HAP-1 (cell line): ENCODE measurements at regions of chr9 and their contacts with region 1.

Region 1: DNA sequence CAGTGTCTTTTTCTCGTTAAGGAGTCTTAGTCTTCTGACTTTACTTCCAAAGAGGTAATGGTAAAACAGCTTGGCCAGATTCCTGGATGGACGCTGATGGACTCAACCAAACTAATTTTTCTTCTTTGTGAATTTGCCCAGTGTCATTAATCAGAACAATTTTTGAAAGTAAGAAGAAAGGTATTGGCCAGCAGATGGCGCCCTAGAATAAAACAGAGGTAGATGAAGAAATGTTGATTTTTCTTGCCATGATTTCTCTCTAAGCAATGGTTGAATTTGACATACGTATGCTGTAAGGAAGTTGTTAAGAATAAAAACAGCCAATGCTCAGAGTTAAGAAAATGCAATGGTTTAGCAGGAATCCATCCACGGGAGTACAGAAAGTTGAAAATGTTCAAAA is 500.0 kb downstream of the DIRAS2 start:
- DNase-seq: peak; percentile 11 to 67
- H3K4me3 ChIP-seq: no peak overlapping the region
- H3K4me1 ChIP-seq: no peaks in the 10 kb centered on the region
- H3K27me3 ChIP-seq: 0 out of 2 replicates have a peak, but pooled peaks cover 2% of the 10 kb centered on the region

Region 2: DNA sequence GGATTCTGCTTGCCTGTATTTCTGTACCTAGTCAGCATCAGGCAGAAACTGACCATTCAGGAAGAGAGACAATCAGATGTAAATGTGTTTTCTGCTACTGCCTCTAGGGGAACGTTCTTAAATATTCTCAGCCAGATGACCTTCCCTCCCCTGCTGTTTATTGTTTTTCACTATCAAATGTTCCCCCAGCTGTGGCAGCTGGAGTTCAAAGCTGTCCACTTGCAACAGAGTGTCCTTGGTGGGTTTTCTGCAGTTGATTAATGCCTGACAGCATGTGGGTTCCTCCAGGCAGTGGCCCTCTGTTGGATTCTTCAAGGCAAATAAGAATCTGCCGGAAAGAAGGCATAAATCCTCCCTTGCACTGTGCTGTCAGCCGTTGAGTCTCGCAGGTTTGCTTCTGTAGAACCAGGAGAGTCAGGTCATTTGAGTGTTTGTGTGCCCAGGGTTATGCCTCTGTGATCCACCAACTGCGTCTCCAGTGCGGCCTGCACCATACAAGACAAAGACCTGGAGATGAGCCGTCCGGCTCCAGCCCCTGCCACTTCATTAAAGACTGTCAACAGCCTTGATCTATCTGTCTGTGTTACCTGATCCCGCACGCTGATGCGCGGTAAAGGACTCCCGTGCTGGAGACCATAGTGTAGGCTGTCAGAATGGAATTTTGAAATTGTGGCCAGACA is 334.4 kb before region 1 on chr9:
- in situ Hi-C with region 1: no loop called
- DNase-seq: no peak
- H3K4me3 ChIP-seq: no peak overlapping the region
- H3K4me1 ChIP-seq: no peaks in the 10 kb centered on the region
- H3K27me3 ChIP-seq: no peaks in the 10 kb centered on the region

Region 3: GRCh38 chr9:90340421-90340820 is 197.8 kb after region 1 on chr9:
- in situ Hi-C with region 1: no loop called
- DNase-seq: no peak
- H3K4me3 ChIP-seq: no peak overlapping the region
- H3K4me1 ChIP-seq: no peaks in the 10 kb centered on the region
- H3K27me3 ChIP-seq: no peaks in the 10 kb centered on the region

Region 4: GRCh38 chr9:90433398-90433941 is 290.9 kb after region 1 on chr9:
- in situ Hi-C with region 1: no loop called
- DNase-seq: peak in 1 of 2 experiments; percentile 27
- H3K4me3 ChIP-seq: no peak overlapping the region
- H3K4me1 ChIP-seq: no peaks in the 10 kb centered on the region
- H3K27me3 ChIP-seq: no peaks in the 10 kb centered on the region

Region 5: GRCh38 chr9:90773617-90774016 is 631.0 kb after region 1 on chr9:
- in situ Hi-C with region 1: loop called (anchors 25 kb)
- DNase-seq: no peak
- H3K4me3 ChIP-seq: no peak overlapping the region
- H3K4me1 ChIP-seq: no peaks in the 10 kb centered on the region
- H3K27me3 ChIP-seq: no peaks in the 10 kb centered on the region

Region 6: DNA sequence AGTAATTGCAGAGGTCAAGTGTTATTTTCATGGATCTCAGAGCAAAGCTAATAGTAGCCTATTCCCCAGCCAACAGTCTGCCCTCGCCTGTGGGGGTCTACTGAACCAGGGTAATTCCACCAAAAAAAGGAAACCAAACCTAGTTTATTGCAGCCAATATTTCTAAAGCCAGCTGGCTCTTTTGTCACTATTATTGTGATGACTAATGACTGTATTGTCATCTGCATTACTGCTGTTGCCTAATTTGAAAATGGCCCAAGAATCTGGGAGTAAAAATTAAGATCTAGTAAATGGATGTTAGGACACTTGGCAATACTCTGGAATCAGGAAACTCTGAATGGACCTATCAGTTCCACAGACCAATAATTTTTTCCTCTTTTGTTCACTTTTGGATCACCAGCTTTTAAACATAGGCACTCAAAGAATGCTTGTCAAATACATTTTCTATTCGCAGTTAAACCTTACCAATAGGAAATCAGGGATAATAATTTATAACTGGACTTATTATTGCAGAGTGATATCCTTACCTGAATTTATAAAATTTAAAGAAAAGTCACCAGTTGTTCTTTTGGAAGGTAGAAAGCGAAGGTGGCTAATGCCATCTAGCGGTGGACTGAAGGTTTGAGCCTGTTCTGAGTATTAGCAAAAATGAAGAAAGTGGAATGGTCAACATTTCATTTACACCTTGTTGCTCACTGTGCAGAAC is 728.2 kb after region 1 on chr9:
- in situ Hi-C with region 1: loop called (anchors 10 kb)
- DNase-seq: peak; percentile 41 to 42
- H3K4me3 ChIP-seq: no peak overlapping the region
- H3K4me1 ChIP-seq: peaks cover 8% of the 10 kb centered on the region
- H3K27me3 ChIP-seq: peaks cover 10% of the 10 kb centered on the region; the same call in 1 of the 2 replicates